Lower leg skin (tissue), 4 donors: ENCODE measurements at regions of chr14 and their contacts with region 1.

Region 1: DNA sequence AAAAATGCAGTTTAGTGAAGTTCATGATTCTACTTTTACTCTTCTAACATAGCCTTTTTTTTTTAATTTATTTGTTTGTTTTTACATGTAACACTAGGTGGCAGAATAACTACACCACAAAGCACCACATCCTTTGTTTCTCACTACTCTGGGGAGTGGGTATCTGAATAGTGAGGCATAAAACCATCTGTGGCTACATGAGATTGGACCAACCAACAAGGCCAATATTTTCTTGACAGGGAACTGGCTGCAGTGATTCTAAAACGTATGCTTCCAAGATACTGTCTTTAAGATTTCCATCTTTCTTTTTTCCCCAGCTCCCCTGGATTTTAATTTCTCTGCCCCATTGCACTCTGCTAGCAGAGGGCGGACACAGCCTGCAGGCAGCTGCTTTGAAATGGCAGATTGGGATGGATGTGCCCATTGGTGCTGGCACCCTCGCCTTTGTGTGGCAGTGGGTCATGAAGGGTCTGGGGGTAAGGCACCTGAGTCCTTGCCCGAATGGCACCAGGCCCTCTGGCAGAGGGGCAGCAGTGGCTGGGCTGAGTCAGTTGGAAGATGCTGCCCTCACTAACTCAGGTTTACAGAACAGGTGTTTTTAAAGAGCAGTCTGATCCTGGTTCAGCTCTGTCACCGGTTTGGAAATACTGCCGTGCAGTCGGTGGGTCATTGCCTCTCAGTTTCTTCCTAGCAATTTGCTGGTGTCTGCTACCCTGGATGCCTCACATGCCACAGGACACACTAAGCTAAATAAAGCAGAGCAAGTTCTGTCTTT is 429.1 kb downstream of the RAD51B start:
- DNase-seq: peak in 1 of 2 donors; percentile 86
- H3K4me3 ChIP-seq: no peak overlapping the region
- CTCF ChIP-seq: no peak
- POLR2A ChIP-seq: no peak

Region 2: DNA sequence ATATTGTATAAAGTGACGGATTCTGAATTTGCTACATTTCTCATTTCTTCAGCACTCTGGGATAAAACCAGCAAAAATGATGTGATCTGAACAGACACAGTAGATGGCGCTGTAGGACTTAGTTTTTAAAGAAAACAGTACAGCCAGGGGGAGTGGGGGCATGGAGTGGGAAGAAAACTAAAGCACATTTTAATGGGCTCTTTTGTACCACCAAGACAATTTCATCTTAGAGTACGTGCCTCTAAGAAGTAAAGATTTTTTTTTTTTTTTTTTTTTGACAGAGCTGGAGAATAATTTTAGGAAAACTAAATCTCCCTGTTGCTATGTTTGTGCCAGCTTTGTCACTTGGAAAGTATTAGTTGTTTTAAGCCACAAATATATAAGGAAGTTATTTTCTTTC is 304.7 kb before region 1 on chr14:
- intact Hi-C with region 1: loop called (anchors 10 kb)
- DNase-seq: peak; percentile 87 to 88
- H3K4me3 ChIP-seq: no peak overlapping the region
- CTCF ChIP-seq: peak in 1 of 3 donors; percentile 92
- POLR2A ChIP-seq: no peak

Region 3: GRCh38 chr14:68816262-68816942 is 567.7 kb after region 1 on chr14:
- intact Hi-C with region 1: loop called (anchors 5 kb)
- DNase-seq: peak; percentile 83 to 98
- H3K4me3 ChIP-seq: peak overlapping the region; percentile 31
- CTCF ChIP-seq: peak in 1 of 3 donors; percentile 99
- POLR2A ChIP-seq: no peak

Region 4: GRCh38 chr14:68911594-68912227 is 663.0 kb after region 1 on chr14:
- intact Hi-C with region 1: no loop called
- DNase-seq: peak; percentile 59 to 94
- H3K4me3 ChIP-seq: no peak overlapping the region
- CTCF ChIP-seq: peak in 1 of 3 donors; percentile 75
- POLR2A ChIP-seq: no peak